Activated T-helper 1 cell treated with anti-CD3 and anti-CD28 coated beads, Interleukin-12 subunit alpha, Interleukin-12 subunit beta, Interleukin-2, Interleukin-4 antibody, amounts not matched to agents 30 ng/mL and 10 ng/mL and 1 ng/mL, durations not matched to agents 14 hours and 24 hours and 36 hours (primary cell): ENCODE measurements at regions of chr16 and their contacts with region 1.

Region 1: GRCh38 chr16:81623363-81624102 is 155.6 kb upstream of the PLCG2 start:
- DNase-seq: peak; percentile 42
- H3K4me3 Mint-ChIP-seq: no peak overlapping the region
- H3K27ac Mint-ChIP-seq: peak overlapping the region; percentile 70
- H3K4me1 Mint-ChIP-seq: peaks cover 25% of the 10 kb centered on the region
- H3K27me3 Mint-ChIP-seq: no peaks in the 10 kb centered on the region

Region 2: DNA sequence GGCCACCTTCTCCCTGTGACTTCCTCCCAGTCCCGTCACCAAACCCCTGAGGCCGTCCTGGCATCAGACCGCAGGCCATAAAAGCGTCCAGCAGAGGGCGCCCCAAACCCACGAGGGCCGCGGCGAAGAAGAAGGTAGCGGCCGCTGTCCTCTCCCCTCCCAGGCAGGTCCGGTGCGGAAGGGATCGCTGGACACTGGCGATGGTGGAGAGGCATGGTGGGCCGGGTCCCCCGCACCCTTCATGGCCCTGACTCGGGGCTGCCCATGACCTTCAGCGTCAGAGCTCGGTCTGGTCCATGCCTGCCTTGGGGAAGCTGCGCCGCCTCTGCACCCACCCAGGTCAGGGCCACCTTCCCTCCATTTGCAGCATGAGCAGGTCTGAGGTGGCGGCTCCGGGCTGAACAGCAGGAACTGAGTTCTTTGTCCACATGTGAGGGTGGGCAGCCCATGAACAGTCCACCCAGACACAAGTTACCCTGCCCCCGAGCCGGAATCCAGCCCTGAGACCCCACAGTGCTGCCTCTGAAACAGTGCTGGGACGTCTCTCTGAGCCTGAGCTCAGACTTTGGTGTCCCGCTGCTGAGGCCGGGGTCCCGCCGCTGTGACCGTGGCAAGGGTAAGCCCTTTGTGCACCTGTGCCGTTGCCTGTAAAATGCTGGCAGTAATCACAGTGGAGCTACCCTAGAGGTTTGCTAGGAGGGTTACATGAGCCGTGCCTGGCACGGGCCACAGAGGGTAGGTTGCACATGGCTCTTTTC is 219.7 kb before region 1 on chr16:
- intact Hi-C with region 1: loop called (anchors 1 kb)
- DNase-seq: peak; percentile 65
- H3K4me3 Mint-ChIP-seq: no peak overlapping the region
- H3K27ac Mint-ChIP-seq: no peak overlapping the region
- H3K4me1 Mint-ChIP-seq: no peaks in the 10 kb centered on the region
- H3K27me3 Mint-ChIP-seq: peaks cover 4% of the 10 kb centered on the region

Region 3: GRCh38 chr16:81444448-81445121 is 178.9 kb before region 1 on chr16 and contains the start of gene CMIP:
- intact Hi-C with region 1: loop called (anchors 1 kb)
- DNase-seq: peak; percentile 78
- H3K4me3 Mint-ChIP-seq: peak within 1 kb of the TSS; percentile 88
- H3K27ac Mint-ChIP-seq: peak within 1 kb of the TSS; percentile 93
- H3K4me1 Mint-ChIP-seq: peaks cover 48% of the 10 kb centered on the region
- H3K27me3 Mint-ChIP-seq: peaks cover 28% of the 10 kb centered on the region
- total RNA-seq, gene CMIP: 45.4 and 45.8 TPM in 2 replicates

Region 4: GRCh38 chr16:81505011-81505661 is 118.4 kb before region 1 on chr16:
- intact Hi-C with region 1: no loop called
- DNase-seq: no peak
- H3K4me3 Mint-ChIP-seq: no peak overlapping the region
- H3K27ac Mint-ChIP-seq: no peak overlapping the region
- H3K4me1 Mint-ChIP-seq: peaks cover 6% of the 10 kb centered on the region
- H3K27me3 Mint-ChIP-seq: no peaks in the 10 kb centered on the region

Region 5: DNA sequence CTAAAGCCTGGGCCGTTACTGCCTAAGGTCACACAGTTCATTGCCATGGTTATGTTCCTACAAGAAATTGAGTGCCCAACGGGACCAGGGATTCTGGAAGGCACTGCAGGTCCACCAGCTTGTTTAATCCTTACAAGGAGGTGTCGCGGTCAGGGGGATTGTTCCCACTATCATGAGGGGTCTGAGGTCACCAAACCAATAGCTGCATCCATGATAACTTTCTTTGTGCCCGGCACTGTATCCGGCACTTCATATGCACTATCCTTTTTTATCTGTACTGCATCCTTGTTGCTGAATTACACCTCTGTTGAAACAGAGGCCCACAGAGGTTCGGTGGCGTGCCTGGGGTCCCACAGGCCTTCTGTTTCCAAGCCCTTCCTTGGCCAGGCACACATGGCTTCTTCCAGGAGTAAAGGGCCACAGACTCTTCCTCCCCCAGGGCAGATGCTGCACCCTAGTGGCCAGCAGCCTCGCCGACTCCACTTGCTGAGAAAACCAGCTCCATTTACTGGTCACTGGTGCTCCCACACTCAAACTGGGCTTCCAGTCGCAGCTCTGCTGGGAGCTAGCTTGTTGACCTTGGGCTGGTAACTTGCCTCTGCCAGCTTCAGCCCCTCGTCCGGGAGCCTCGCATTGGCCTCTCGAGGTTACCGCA is 73.6 kb after region 1 on chr16:
- intact Hi-C with region 1: loop called (anchors 1 kb)
- DNase-seq: peak; percentile 37
- H3K4me3 Mint-ChIP-seq: no peak overlapping the region
- H3K27ac Mint-ChIP-seq: peak overlapping the region; percentile 23
- H3K4me1 Mint-ChIP-seq: peaks cover 13% of the 10 kb centered on the region
- H3K27me3 Mint-ChIP-seq: no peaks in the 10 kb centered on the region

Region 6: GRCh38 chr16:81723098-81723723 is 99.7 kb after region 1 on chr16:
- intact Hi-C with region 1: loop called (anchors 1 kb)
- DNase-seq: peak; percentile 30
- H3K4me3 Mint-ChIP-seq: no peak overlapping the region
- H3K27ac Mint-ChIP-seq: no peak overlapping the region
- H3K4me1 Mint-ChIP-seq: peaks cover 21% of the 10 kb centered on the region
- H3K27me3 Mint-ChIP-seq: peaks cover 12% of the 10 kb centered on the region

Region 7: DNA sequence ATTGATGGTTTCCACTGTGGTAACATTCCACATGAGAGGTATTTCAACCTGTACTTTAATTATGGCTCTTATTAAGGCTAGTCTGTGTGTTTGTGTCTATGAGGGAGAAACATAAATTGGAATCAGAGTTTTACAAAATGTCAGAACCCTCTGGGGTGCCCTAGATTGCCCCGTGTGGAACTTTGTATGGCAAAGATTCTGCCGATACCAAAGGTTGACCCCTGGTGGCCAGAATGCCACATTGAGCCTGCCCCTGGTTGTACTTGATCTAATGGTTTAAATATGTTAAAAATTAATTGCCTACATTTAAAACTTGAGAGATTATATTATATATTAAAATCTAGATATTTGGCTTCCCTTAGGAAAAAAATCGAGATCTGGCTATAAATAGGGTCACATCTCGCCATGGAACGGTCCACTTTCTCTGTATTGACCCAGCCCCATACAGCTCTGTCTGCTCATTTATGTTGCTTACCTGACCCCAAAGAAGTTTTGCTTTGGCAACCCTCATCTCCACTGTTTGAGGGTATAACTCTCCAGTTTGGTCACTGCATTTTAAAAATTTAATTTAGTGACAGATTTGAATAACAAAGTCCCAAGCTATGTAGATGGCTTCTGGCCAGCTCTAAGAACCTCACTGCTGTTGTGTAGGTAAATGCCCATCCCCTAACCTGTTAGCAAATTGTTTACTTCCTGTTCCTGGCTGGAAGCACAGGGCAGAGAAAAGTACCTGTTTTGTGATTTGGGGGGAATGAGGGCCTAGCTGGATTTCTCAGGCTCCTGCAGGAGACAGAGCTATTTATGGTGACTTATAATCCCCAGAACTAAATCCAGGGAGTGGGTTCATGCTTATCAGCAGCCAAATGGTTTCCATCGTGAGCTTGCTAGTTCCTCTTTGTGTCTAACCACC is 250.6 kb after region 1 on chr16:
- intact Hi-C with region 1: loop called (anchors 2 kb)
- DNase-seq: peak; percentile 38
- H3K4me3 Mint-ChIP-seq: no peak overlapping the region
- H3K27ac Mint-ChIP-seq: no peak overlapping the region
- H3K4me1 Mint-ChIP-seq: peaks cover 8% of the 10 kb centered on the region
- H3K27me3 Mint-ChIP-seq: peaks cover 12% of the 10 kb centered on the region